Ascending aorta (tissue), 2 donors: ENCODE measurements at regions of chr3 and their contacts with region 1.

Region 1: DNA sequence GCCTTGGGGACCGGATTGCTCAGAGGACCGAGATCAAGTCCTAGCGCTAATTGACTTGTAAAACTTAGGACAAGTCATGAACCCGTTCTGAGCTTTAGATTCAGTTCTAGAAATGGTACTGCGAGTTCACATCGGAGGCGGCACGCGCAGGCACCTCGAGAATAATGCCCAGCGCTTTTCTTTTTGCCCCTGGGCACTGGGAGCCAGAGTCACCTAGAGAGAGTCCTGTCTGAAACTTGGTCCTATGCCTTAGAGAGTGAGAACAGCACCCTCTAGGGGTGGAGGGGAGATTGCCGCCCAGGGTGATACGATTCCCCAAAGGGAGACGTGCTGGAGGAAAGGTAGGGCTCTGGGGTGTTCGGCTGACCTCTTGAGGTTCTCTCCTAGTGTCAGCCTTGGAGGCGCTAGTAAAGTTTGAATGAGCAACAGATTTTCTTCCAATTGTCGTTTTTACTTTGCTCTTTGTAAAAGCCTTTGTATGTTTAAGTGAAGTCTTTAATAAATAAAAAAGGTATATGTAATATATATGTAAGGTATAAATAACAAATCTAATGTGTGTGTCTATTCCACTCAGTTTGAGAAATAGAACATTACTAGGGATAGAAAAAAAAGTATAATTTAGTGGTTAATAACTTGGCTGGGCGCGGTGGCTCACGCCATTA is 826 bp downstream of the EEF1AKMT4 start:
- DNase-seq: peak; percentile 55 to 94
- H3K4me3 ChIP-seq: peak overlapping the region; percentile 70 to 86
- H3K27ac ChIP-seq: peak overlapping the region in 1 of 2 donors; percentile 45
- H3K4me1 ChIP-seq: peaks cover 0 to 14% of the 10 kb centered on the region in 2 donors
- H3K27me3 ChIP-seq: no peaks in the 10 kb centered on the region
- CTCF ChIP-seq: peak; percentile 78 to 90 (median 88)

Region 2: DNA sequence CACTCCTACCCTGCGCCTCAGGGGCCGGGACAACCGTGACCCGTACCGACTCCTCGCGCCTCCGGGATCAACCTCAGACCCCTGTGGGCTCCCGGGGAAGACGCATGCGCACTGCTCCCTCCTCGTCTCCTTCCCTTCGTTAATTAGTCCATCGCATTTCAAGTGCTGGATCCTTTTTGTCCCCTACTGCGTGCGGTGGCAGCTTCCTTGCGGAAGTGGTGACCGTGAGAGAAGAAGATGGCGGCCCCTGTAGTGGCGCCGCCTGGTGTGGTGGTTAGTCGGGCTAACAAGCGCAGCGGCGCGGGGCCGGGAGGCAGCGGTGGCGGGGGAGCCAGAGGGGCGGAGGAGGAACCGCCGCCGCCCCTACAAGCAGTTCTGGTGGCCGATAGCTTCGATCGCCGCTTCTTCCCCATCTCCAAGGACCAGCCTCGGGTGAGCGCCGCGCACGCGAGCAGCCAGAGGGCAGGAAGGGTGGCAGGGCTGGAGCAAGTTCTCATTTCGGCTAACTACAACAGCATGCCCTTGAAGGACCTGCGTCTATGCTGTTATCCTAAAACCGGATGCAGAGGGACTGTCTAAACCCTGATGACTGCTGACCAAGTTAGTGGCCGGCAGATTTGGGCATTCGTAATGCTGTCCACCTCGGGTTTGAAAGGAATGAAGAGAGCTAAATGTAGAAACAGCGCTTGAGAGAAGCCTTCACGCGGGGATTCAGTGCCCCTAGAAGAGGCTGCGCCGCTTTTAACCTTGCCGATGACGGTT is 115.0 kb before region 1 on chr3 and contains the start of gene EIF2B5:
- intact Hi-C with region 1: loop called (anchors 5 kb)
- DNase-seq: peak; percentile 71 to 96
- H3K4me3 ChIP-seq: peak within 1 kb of the TSS; percentile 74 to 91
- H3K27ac ChIP-seq: peak within 1 kb of the TSS; percentile 90 to 91
- H3K4me1 ChIP-seq: peaks cover 3 to 9% of the 10 kb centered on the region in 2 donors
- H3K27me3 ChIP-seq: no peaks in the 10 kb centered on the region
- CTCF ChIP-seq: peak in 2 of 3 experiments; percentile 44 to 51
- total RNA-seq, gene EIF2B5: 24.7 TPM

Region 3: DNA sequence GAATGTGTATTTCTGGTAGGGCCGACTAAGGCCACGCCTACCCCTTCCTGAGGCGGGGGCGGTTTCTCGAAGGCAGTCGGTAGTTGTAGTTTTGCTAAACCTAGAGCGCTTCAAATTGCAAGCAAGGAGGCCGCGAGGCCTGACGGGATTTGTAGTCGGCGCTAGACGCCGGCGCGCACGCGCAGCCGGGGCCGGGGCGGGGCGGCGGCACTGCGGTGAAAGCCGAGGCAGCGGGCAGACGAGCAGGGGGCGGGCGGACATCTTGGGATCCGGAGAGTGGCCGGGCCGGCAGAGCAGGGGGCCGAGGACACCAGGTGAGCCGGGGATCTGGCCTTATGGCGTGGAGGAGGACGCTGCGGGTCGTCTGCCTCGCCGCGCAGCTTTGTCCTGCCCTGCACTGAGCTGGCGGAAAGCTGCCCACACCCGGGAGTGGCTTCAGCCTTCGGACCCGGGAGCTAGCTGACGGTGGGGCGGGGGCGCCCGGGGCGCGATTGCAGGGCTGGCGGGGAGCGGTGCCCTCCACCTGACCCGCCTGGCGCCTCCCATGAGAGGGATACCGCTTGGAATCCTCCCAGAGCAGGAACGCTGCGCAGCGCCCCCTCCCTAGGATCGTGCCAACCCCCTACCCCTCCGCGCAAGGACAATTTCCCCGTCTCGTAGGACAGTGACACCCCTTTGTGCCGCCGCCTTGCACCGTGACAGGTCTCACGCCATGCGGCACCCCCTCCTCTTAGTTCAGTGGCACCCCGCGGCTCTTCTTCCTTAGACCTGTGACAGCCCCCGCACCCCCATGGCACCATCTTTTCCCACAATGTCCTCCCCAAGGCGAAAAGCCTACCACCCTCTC is 75.4 kb before region 1 on chr3 and contains the start of gene AP2M1:
- intact Hi-C with region 1: loop called (anchors 1 kb)
- DNase-seq: peak; percentile 98 to 100
- H3K4me3 ChIP-seq: peak within 1 kb of the TSS; percentile 96 to 97
- H3K27ac ChIP-seq: peak within 1 kb of the TSS; percentile 91 to 96
- H3K4me1 ChIP-seq: peaks cover 11 to 18% of the 10 kb centered on the region in 2 donors
- H3K27me3 ChIP-seq: no peaks in the 10 kb centered on the region
- CTCF ChIP-seq: no peak
- total RNA-seq, gene AP2M1: 101 TPM

Region 4: GRCh38 chr3:184298759-184299496 is 48.6 kb after region 1 on chr3 and contains the start of gene PSMD2:
- intact Hi-C with region 1: loop called (anchors 1 kb)
- DNase-seq: peak; percentile 84 to 99
- H3K4me3 ChIP-seq: peak within 1 kb of the TSS; percentile 75 to 78
- H3K27ac ChIP-seq: peak within 1 kb of the TSS; percentile 73 to 76
- H3K4me1 ChIP-seq: no peaks in the 10 kb centered on the region
- H3K27me3 ChIP-seq: no peaks in the 10 kb centered on the region
- CTCF ChIP-seq: peak in 1 of 3 experiments; percentile 18
- total RNA-seq, gene PSMD2: 151 TPM